ENCODE measurements at regions of chr9 and their contacts with region 1.

Region 1: GRCh38 chr9:133960568-133961129 is 31.5 kb downstream of the VAV2 start:
- DNase-seq: no peak

Region 2: GRCh38 chr9:133821601-133822429 is 138.8 kb before region 1 on chr9:
- in situ Hi-C with region 1: loop called (anchors 10 kb)
- DNase-seq: no peak

Region 3: GRCh38 chr9:134014946-134015345 is 54.3 kb after region 1 on chr9:
- in situ Hi-C with region 1: loop called (anchors 5 kb)
- DNase-seq: no peak

Region 4: GRCh38 chr9:134188386-134189144 is 227.9 kb after region 1 on chr9:
- in situ Hi-C with region 1: no loop called
- DNase-seq: no peak

Measured in G401 (cell line).